WTC11 (cell line): ENCODE measurements at regions of chrX and their contacts with region 1.

Region 1: GRCh38 chrX:69222103-69223090 is 57.1 kb upstream of the PJA1 start:
- DNase-seq: peak; percentile 87
- ATAC-seq: peak; percentile 72
- H3K4me3 Mint-ChIP-seq: peak overlapping the region; percentile 43
- H3K27ac Mint-ChIP-seq: no peak overlapping the region
- H3K4me1 Mint-ChIP-seq: peaks cover 11% of the 10 kb centered on the region
- H3K27me3 Mint-ChIP-seq: peaks cover 51% of the 10 kb centered on the region
- CTCF ChIP-seq: peak; percentile 79

Region 2: DNA sequence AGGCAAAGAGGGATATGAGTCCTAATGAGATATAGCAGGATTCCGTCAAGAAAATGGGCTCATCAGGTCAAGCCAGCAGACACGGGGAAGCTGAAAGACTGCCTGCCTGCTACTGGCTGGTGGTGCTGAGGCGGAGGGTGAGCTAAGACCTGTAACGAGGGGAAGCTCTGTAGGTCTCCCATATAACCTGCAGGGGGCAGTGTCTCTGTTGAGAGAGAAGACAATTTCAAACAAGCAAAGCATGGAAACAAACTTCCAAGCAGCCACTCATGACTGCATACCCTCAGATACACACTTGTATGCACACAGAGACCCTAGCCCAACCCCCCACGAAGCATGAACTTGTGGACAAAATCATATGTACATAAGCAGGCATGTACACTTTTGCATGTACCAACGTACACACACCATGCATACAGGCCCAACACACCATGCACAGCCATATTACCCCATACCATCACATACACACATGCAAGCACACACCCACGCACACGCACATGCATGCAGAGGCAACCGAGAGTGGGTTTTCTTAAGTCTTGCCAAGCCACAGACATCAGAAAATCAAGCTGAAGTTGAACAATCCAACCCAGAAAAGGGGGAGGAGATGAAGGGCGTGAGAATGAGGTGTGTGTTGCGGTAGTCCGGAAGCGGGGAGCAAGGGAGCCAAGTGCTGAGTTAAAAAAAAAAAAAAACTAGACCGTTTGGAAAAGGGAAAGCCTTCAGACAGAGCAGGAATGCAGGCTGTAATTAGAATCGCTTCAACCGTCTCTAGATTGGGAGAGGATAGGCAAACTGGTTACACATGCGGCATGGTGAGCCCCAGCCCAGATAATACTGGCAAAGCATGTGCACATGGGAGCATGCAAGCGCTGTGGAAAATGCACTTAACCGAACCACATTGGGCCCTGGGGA is 128.2 kb before region 1 on chrX:
- CTCF ChIA-PET with region 1: interaction called, 11 read pairs
- POLR2A ChIA-PET with region 1: no interaction called
- DNase-seq: peak; percentile 55
- ATAC-seq: peak; percentile 92
- H3K4me3 Mint-ChIP-seq: no peak overlapping the region
- H3K27ac Mint-ChIP-seq: no peak overlapping the region
- H3K4me1 Mint-ChIP-seq: no peaks in the 10 kb centered on the region
- H3K27me3 Mint-ChIP-seq: no peaks in the 10 kb centered on the region
- CTCF ChIP-seq: peak; percentile 65

Region 3: DNA sequence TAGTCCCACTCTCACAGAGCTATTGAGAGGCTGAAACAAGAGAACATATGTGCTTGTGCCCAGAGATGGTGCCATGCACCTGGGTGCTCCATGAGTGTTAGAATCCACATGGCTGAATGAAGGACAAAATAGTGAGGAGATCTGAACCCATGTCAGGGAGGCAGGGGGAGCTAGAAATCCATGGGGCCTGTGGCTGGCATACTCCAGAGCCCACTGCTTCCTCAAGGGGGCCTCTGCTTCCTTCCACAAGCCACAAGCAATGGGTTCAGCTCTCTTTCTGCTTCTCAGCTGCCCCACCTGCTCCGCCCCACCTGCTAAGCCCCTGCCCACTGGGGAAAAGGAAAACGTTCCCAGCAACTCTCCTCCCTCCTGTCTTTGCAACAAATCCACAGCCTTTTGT is 103.3 kb before region 1 on chrX:
- CTCF ChIA-PET with region 1: interaction called, 18 read pairs
- POLR2A ChIA-PET with region 1: no interaction called
- DNase-seq: peak; percentile 23
- ATAC-seq: peak; percentile 82
- H3K4me3 Mint-ChIP-seq: no peak overlapping the region
- H3K27ac Mint-ChIP-seq: no peak overlapping the region
- H3K4me1 Mint-ChIP-seq: peaks cover 6% of the 10 kb centered on the region; the same call in 1 of the 2 replicates
- H3K27me3 Mint-ChIP-seq: peaks cover 3% of the 10 kb centered on the region; the same call in 1 of the 2 replicates
- CTCF ChIP-seq: no peak

Region 4: DNA sequence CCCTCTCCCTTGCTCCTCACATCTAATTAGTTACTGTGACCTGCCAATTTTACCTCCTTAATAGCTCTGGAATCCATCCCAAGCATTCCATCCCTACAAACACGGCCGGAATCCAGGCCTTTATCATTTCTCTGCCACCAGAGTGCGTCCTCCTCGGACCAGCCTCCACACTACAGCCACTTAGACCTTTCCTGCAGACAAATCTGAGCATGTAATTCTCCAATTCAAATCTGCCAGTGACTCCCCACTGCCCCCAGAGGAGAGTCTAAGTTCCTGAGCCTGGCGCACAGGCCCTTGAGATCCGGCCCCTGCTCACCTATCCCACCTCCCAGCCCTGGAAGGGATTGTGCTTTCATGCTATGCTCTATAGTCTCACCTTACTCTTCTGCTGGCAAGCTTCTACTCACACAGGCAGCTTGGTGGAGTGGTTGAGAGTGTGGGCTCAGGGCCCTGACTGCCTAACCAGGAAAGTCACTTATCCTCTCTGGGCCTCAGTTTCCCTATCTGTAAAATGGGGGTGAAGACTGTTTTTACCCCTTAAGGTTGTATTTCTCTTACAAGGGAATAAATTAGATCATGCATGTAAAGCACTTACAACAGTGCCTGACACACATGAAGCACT is 88.4 kb before region 1 on chrX:
- CTCF ChIA-PET with region 1: interaction called, 27 read pairs
- POLR2A ChIA-PET with region 1: no interaction called
- DNase-seq: peak; percentile 63
- ATAC-seq: peak; percentile 80
- H3K4me3 Mint-ChIP-seq: no peak overlapping the region; the same call in 1 of the 2 replicates
- H3K27ac Mint-ChIP-seq: peak overlapping the region; percentile 67; the same call in 1 of the 2 replicates
- H3K4me1 Mint-ChIP-seq: peaks cover 68% of the 10 kb centered on the region
- H3K27me3 Mint-ChIP-seq: peaks cover 25% of the 10 kb centered on the region
- CTCF ChIP-seq: no peak

Region 5: DNA sequence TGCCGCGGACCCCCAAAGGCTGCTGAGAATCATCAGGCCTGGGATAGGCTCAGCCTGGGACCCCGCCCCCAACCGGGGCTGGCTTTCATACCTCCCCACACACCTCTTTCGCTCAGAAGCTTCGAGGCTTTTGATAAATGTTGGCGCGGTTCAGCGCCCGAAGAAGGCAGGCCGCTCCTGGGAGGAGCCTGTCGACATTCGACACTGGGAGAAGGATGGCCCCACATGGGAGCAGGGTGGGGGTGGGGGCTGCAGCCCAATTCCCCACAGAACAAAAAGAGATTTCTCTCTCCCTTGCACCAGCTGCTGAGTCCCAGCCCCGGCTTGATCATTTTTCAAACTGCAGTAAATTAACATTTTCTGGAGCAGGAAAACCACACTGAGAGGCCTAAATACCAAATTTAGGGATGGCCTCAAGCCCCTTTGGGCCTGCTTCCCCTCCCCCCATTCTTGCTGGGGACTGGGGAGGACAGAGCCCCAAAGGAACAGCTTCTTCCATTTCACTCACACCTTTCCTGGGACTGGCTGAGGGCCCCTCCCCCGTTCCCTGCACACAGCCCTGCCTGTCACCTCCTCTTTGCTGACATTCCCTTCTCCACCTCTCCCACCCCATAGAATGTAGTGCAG is 55.8 kb after region 1 on chrX:
- CTCF ChIA-PET with region 1: interaction called, 85 read pairs
- POLR2A ChIA-PET with region 1: interaction called, 4 read pairs
- DNase-seq: peak; percentile 44
- ATAC-seq: peak; percentile 83
- H3K4me3 Mint-ChIP-seq: no peak overlapping the region
- H3K27ac Mint-ChIP-seq: no peak overlapping the region
- H3K4me1 Mint-ChIP-seq: peaks cover 34% of the 10 kb centered on the region
- H3K27me3 Mint-ChIP-seq: peaks cover 95% of the 10 kb centered on the region
- CTCF ChIP-seq: no peak

Region 6: GRCh38 chrX:69361311-69361845 is 139.0 kb after region 1 on chrX:
- CTCF ChIA-PET with region 1: no interaction called
- POLR2A ChIA-PET with region 1: no interaction called
- DNase-seq: no peak
- ATAC-seq: no peak
- H3K4me3 Mint-ChIP-seq: no peak overlapping the region
- H3K27ac Mint-ChIP-seq: no peak overlapping the region
- H3K4me1 Mint-ChIP-seq: no peaks in the 10 kb centered on the region
- H3K27me3 Mint-ChIP-seq: peaks cover 7% of the 10 kb centered on the region; the same call in 1 of the 2 replicates
- CTCF ChIP-seq: no peak

Region 7: DNA sequence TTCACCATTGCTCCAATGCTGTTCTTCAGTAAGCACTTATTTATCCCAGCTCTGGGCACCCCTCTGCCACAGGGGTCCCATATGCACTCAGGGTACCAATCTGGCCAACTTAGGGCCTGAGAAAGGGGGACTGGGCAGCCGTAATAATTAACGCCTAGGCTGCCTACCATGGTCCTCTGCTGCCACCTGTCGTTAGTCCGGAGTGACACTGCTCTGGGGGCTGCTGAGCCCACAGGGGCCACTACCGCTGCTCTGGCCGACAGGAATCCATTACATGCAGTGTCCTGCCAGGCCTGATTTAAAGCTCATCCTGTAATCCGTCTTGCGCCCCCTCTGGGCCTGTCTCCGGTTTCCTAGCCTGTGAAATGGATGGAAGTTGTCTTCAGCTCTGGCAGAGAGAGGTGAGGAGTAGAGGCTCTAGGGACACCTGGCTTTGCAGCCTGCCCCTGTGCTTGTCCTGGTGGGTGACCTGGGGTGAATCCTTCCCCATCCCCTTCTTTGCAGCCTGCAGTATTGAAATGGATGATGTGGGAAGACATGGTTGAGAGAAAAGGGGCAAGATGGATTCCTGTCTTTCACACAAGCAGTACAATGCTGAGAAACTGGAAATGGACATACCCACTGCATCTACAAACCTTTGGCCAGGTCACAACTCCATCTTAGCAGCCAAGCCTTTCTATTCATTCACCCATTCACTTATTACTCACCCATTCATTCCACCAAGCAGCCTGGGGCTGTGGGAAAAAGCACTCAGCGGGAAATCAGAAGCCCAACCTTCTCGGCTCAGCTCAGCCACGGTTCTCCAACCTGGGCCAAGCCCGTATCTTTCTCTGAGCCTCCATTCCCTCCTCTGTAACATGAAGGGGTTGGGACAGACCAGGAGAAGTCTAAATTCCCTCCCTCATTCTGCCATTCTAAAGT is 165.4 kb after region 1 on chrX:
- CTCF ChIA-PET with region 1: interaction called, 49 read pairs
- POLR2A ChIA-PET with region 1: no interaction called
- DNase-seq: peak; percentile 82
- ATAC-seq: peak; percentile 98
- H3K4me3 Mint-ChIP-seq: no peak overlapping the region
- H3K27ac Mint-ChIP-seq: no peak overlapping the region
- H3K4me1 Mint-ChIP-seq: peaks cover 23% of the 10 kb centered on the region
- H3K27me3 Mint-ChIP-seq: peaks cover 28% of the 10 kb centered on the region
- CTCF ChIP-seq: peak; percentile 63